Heart right ventricle (tissue), 16 donors: ENCODE measurements at regions of chr14 and their contacts with region 1.

Region 1: DNA sequence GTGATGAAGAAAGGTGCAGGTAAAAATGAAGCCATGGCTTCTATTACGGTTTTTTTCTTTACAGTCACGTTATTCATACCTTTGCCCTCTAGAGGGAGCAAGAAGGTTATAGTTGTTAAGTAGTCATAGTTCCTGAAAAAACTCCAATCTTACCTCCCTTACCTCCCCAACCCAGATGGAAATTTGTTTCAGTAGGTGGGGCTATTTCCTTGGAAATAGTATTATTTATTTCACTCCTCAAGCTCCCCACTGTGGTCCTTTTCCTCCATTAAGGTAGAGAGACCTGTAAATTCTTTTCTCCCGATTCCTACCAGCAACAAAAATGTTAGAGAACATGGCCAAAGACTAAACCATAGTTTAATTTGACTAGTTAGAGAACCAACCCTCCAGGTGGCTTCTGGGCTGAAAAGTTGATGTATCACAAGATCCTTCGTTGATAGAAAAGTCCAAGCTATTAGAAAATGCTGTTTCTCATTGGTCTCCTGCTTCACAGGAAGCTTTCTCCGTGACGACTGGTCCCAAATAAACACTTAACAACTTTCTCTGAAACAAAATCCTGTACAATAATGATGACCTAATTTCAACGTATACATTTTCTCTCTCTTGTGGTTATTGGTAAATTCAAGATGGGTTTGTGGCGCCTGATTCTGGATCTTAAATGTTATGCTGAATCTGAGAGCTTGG is 43.5 kb downstream of the TMX1 start:
- DNase-seq: peak in 1 of 2 donors; percentile 36
- ATAC-seq: peak in 7 of 8 donors; percentile 85 to 90 (median 87)
- H3K4me3 ChIP-seq: no peak overlapping the region
- H3K27ac ChIP-seq: no peak overlapping the region
- H3K4me1 ChIP-seq: no peaks in the 10 kb centered on the region
- H3K27me3 ChIP-seq: no peaks in the 10 kb centered on the region
- CTCF ChIP-seq: peak; percentile 50 to 92 (median 85)

Region 2: GRCh38 chr14:51554953-51555352 is 271.4 kb after region 1 on chr14:
- intact Hi-C with region 1: loop called in 1 of 10 experiments (anchors 10 kb)
- DNase-seq: no peak
- ATAC-seq: no peak
- H3K4me3 ChIP-seq: no peak overlapping the region
- H3K27ac ChIP-seq: no peak overlapping the region
- H3K4me1 ChIP-seq: no peaks in the 10 kb centered on the region
- H3K27me3 ChIP-seq: no peaks in the 10 kb centered on the region
- CTCF ChIP-seq: peak in 2 of 9 donors; percentile 7 to 15

Region 3: GRCh38 chr14:51651388-51652167 is 368.0 kb after region 1 on chr14 and contains the start of gene FRMD6:
- intact Hi-C with region 1: loop called in 9 of 10 experiments (anchors 2 to 10 kb)
- DNase-seq: peak; percentile 89 to 92
- ATAC-seq: peak; percentile 91 to 98 (median 92)
- H3K4me3 ChIP-seq: peak within 1 kb of the TSS; percentile 73 to 98 (median 89)
- H3K27ac ChIP-seq: peak within 1 kb of the TSS; percentile 90 to 99 (median 97)
- H3K4me1 ChIP-seq: peaks cover 0 to 44% (median 11%) of the 10 kb centered on the region in 9 donors
- H3K27me3 ChIP-seq: peaks cover 0 to 29% (median 0%) of the 10 kb centered on the region in 7 donors
- CTCF ChIP-seq: peak; percentile 61 to 88 (median 79)
- total RNA-seq, gene FRMD6: 5.9 to 14.2 (median 6.9) TPM

Region 4: GRCh38 chr14:51979088-51979709 is 695.7 kb after region 1 on chr14:
- intact Hi-C with region 1: loop called in 4 of 10 experiments (anchors 2 to 10 kb)
- DNase-seq: peak; percentile 76 to 83
- ATAC-seq: peak; percentile 75 to 85 (median 78)
- H3K4me3 ChIP-seq: no peak overlapping the region
- H3K27ac ChIP-seq: peak overlapping the region in 5 of 10 donors; percentile 24 to 61 (median 41)
- H3K4me1 ChIP-seq: peaks cover 0 to 17% (median 0%) of the 10 kb centered on the region in 9 donors
- H3K27me3 ChIP-seq: no peaks in the 10 kb centered on the region
- CTCF ChIP-seq: peak; percentile 86 to 96 (median 95)